Right ventricle myocardium inferior (tissue), 1 donor: ENCODE measurements at regions of chr17 and their contacts with region 1.

Region 1: GRCh38 chr17:75779231-75779986 is 5.2 kb upstream of the UNK start:
- DNase-seq: peak; percentile 96
- ATAC-seq: peak; percentile 79

Region 2: DNA sequence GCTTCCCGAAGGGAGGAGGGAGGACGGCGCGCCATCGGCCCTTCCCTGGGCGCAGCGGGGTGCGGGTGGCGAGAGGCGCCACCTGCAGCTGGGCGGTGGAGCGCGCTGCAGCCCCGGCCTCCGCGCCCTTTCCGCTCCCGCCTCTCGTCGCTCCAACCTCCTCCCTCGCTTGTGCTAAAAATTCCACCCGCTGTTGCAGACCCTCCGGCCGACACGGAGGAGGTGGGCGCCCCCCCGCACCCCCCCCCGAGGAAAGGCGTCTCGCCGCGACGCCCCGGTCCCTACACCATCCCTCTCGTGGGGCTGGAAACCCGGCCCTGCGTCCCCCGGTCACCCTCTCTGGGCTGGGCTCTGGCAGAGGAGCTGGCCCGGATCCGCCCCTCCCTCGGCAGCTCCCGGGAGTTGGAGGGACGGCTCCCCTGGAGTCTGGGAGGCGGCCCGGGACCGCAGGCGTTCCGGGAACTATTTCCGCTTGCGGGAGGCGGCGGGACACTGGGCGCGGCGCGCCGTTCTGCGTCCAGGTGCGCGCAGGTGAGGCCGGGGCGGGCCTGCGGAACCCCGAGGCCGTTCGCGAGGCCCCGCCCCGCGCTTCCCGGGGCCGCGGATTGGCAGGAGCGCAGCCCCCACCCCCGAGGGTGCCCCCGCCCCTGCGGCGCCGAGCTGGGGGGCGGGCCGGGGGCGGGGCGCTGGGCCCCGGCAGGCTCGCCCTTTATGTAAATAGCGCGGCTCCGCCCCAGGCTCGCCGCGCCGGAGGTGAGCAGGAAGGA is 254.3 kb before region 1 on chr17 and contains the start of gene LLGL2:
- intact Hi-C with region 1: no loop called
- DNase-seq: peak; percentile 92
- ATAC-seq: peak; percentile 85
- total RNA-seq, gene LLGL2: 4.1 TPM

Region 3: DNA sequence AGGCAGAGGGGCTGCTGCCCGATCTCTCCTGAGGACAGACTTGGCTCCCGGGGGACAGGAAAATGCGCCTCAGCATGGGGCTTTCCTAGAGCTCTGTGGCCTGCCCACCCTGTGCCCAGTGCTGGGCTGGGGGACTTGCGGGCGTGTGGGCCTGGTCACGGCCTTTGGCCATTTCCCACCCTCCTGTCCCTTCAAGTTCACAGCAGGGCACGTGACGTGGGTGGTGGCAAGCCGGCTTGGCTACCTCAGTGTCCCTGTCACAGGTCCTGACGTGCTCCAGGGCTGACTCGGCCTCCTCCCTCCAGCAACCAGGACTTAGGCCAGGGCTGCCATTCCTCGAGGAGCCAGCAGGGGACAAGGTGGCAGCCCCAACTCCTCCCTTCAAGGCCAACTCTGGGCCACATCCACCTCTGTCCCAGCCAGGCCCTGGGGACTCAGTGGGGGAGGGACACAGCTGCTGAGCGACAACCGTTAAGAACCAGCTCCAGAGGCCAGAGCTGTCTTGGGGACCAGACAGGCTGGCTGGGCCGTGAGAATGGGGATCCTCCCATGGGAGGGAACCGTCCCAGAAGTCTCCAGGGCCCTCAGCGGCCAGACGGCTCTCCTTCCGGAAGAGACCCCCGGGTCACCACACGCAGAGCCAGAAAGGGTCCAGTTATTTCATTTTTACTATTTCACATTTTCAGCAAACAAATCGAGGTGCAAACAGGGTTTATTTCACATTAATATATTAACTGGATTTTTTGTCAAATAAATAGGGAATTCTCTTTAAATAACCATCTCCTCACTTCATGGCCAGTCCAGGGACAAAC is 65.8 kb after region 1 on chr17:
- intact Hi-C with region 1: loop called (anchors 1 kb)
- DNase-seq: peak; percentile 91
- ATAC-seq: peak; percentile 82

Region 4: GRCh38 chr17:75877752-75878173 is 98.4 kb after region 1 on chr17:
- intact Hi-C with region 1: loop called (anchors 5 kb)
- DNase-seq: peak; percentile 88
- ATAC-seq: peak; percentile 68

Region 5: DNA sequence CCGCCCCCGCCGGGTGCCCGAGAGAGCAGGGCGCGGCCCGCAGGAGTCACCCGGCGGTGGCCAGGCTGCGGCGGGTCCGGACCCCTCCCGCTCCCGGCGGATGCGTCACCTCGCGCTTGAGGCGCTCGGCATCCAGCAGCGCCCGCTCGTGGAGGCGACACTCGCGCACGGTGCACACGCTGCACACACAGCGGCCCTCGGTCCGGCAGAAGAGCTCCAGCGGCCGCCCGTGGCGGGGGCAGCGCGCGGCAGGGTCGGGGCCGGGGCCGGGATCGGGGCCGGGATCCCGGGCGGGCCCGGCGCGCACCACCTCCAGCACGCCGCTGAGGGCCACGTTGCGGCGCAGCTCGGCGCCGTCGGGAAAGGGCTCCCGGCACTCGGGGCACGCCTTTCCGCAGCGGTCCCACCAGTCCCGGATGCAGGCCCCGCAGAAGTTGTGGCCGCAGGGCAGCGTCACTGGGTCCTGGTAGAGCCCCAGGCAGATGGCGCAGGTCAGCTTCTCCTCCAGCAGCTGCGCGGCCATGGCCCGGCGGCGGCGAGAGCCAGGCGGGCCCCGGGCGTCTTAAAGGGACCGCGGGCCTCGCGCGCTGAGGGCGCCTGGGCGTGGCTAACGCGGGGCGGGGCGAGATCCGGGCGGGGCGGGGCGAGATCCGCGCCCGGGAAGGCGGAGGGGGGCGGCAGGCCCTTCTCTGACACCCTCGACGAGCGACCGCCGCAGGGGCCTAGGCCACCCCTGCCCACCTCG is 117.2 kb after region 1 on chr17 and contains the start of gene TRIM65:
- intact Hi-C with region 1: loop called (anchors 5 kb)
- DNase-seq: peak; percentile 93
- ATAC-seq: peak; percentile 88
- total RNA-seq, gene TRIM65: 11.3 TPM

Region 6: DNA sequence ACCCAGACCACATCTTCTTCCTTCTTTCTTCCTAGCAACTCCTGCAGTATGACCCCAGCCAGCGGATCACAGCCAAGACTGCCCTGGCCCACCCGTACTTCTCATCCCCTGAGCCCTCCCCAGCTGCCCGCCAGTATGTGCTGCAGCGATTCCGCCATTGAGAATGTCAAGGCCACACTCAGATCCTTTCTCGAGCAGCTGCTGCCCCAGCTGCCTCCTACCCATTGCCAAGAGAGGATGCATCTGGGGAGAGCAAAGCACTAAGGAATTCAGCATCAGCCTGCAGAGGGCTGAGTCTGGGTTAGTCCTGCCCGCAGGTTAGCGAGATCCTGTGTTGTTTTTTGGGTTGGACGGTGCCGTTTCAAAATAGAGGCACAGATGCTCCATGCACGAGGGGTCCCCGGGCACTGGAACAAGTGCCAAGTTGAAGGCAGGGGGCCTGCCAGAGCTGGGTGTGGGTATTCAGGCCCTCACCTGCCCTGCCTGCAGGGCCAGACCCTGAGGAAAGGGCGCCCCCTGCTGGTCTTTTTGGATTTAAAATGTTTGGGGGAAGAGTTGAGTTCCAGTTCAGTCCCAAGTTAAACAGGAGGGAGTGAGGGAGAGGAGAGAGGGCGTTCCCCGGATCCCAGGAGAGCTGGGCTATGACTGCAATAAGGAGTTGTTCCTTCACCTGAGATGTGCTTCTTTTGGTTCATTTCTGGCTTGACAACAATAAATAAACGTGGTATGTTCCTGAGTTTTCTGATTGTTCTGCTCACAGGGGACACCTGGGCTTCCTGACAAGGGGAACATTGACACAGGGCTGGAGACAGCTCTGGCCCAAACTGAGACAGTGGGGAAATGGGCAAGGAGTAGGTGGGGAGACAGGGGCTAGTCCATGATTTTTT is 226.1 kb after region 1 on chr17:
- intact Hi-C with region 1: loop called (anchors 10 kb)
- DNase-seq: no peak
- ATAC-seq: peak; percentile 70